ENCODE measurements at regions of chr6 and their contacts with region 1.

Region 1: GRCh38 chr6:150395398-150396009 is 26.7 kb downstream of the IYD start:
- DNase-seq: peak; percentile 54
- H3K4me3 Mint-ChIP-seq: no peak overlapping the region
- H3K27ac Mint-ChIP-seq: peak overlapping the region; percentile 40
- H3K4me1 Mint-ChIP-seq: peaks cover 8% of the 10 kb centered on the region
- H3K27me3 Mint-ChIP-seq: no peaks in the 10 kb centered on the region
- CTCF ChIP-seq: peak; percentile 28

Region 2: DNA sequence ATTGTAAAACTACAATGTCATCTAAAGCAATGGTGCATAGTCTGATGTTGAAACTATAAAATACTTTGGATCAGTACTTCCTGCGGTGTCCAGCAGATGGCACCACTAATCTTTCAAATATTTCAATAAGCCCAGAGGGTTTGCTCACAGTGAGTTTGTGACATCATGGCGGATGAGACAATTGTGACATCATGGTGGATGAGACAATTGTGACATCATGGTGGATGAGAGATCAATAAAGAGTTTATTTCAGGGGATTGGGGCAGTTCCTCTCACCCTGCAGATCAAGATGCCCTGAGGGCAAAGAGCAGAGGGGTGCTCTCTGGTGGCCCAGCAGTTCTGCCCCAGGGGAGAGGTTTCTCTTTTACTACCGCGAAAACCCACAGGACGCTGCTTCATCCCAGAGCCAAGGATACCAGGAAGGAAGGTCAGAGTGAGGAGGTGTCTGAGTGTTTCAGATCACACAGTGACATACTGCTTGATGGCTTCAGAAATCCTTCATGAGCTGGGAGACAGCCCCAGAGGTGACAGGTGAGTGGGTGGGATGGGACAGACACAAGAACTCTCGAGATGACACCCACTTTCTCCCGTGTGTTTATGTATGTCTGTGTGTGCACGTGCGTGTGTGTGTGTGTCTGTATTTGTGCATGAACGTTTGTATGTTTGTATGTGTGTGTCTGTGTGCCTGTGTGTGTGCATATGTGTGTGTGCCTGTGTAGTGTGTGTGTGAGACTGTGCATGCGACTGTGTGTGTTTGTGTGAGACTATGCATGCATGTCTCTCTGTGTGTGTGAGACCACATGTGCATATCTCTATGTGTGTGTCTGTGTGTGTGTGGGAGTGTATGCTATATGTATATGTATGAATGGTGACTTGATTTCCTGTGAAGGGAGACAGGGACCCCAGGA is 461.0 kb before region 1 on chr6:
- CTCF ChIA-PET with region 1: no interaction called
- intact Hi-C with region 1: loop called (anchors 10 kb)
- DNase-seq: peak; percentile 50
- H3K4me3 Mint-ChIP-seq: no peak overlapping the region
- H3K27ac Mint-ChIP-seq: no peak overlapping the region
- H3K4me1 Mint-ChIP-seq: peaks cover 9% of the 10 kb centered on the region
- H3K27me3 Mint-ChIP-seq: peaks cover 96% of the 10 kb centered on the region
- CTCF ChIP-seq: no peak

Region 3: DNA sequence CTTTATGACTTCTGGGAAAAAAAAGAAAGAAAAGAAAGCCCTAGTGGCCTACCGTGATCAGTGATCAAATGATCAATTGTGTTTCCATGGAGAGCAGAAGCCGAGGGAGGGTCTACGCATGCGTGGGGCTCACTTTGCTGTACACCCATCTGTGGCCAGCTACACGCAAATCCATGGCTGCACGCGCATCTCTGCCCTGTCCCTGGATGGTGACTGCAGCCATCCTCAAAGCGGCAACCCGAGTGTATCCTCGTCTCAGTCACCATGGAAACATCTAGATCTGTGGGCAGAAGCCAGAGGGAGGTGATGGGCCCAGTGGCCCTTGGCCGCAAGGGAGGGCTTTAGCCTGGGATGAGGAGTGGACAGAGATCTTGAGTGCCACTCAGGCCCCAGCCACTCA is 325.8 kb before region 1 on chr6:
- CTCF ChIA-PET with region 1: interaction called, 5 read pairs
- intact Hi-C with region 1: loop called (anchors 2 kb)
- DNase-seq: no peak
- H3K4me3 Mint-ChIP-seq: peak overlapping the region; percentile 76
- H3K27ac Mint-ChIP-seq: no peak overlapping the region
- H3K4me1 Mint-ChIP-seq: peaks cover 25% of the 10 kb centered on the region
- H3K27me3 Mint-ChIP-seq: no peaks in the 10 kb centered on the region
- CTCF ChIP-seq: no peak

Region 4: DNA sequence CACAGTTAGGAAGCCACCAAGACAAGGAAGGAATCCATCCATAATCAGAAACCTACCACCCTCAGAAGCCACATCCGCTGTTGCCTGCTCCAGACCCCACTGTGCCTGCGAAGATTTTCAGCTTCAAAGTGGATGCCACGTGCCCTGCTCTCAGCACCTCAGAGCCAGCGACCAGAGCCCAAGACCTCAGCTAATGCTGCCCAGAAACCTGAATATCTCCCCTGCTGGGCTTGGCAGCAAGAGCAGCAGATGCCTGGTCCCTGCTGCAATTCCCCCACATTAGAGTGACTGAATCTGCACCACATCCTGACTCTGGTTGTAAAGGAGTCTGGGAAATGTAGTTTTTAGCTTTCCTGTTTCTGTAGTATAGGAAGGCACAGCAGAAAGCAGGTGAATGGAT is 315.9 kb before region 1 on chr6:
- CTCF ChIA-PET with region 1: interaction called, 19 read pairs
- intact Hi-C with region 1: loop called (anchors 5 kb)
- DNase-seq: no peak
- H3K4me3 Mint-ChIP-seq: no peak overlapping the region
- H3K27ac Mint-ChIP-seq: no peak overlapping the region
- H3K4me1 Mint-ChIP-seq: no peaks in the 10 kb centered on the region
- H3K27me3 Mint-ChIP-seq: peaks cover 16% of the 10 kb centered on the region
- CTCF ChIP-seq: no peak

Region 5: DNA sequence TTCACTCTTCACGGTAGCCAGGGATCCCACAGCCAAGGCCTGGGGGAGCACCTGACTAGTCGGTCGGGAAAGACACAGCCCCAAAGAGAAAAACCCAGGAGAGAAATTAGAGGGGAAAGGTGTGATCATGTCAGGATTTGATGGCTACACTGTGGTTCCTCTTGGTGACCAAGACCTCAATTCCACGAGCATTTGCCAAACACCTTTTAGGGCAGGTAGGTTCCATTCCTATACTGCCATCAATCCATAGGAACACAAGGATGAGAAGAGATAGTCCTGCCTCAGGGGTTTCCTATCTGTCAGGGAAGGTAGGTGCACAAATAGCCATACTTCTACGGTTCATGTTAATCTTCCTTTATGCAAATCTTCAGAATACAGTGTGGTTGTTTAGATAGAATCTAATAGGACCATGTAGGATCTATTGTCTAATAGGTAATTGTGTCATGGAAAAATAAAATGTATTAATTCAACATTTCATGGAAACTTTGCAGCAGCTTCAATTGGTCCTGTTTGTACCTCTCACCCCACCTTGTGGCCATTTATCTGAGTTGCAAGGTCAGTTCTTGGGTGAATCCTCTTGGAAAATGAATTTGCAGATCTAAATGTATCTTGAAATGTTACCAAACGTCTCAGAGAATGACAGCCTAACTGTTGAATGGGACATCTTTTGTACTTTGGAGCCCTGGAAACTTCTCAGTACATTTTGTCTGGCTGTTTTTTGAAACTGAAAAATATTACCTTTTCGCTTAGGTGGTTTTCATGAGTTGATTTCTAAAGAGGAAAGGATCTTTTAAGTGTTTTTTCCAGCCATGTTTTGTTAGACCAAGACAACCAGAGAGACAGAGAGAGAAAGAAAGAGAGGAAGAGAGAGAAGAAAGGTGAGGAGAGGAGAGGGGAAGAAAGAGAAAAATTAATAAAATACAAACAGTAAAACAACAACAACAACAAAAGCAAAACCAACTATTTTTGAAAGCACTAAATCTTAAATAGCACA is 60.4 kb before region 1 on chr6:
- CTCF ChIA-PET with region 1: interaction called, 5 read pairs
- intact Hi-C with region 1: loop called (anchors 2 kb)
- DNase-seq: peak; percentile 46
- H3K4me3 Mint-ChIP-seq: no peak overlapping the region
- H3K27ac Mint-ChIP-seq: no peak overlapping the region
- H3K4me1 Mint-ChIP-seq: peaks cover 19% of the 10 kb centered on the region
- H3K27me3 Mint-ChIP-seq: no peaks in the 10 kb centered on the region
- CTCF ChIP-seq: peak; percentile 47